ENCODE measurements at regions of chr3 and their contacts with region 1.

Region 1: GRCh38 chr3:141231101-141231935 is at the start of gene PXYLP1:
- DNase-seq: peak; percentile 93
- ATAC-seq: peak; percentile 94
- H3K4me3 Mint-ChIP-seq: peak within 1 kb of the TSS; percentile 87
- H3K27ac Mint-ChIP-seq: peak within 1 kb of the TSS; percentile 96
- H3K4me1 Mint-ChIP-seq: peaks cover 50% of the 10 kb centered on the region
- H3K27me3 Mint-ChIP-seq: no peaks in the 10 kb centered on the region
- total RNA-seq, gene PXYLP1: 15.0 to 16.5 TPM

Region 2: DNA sequence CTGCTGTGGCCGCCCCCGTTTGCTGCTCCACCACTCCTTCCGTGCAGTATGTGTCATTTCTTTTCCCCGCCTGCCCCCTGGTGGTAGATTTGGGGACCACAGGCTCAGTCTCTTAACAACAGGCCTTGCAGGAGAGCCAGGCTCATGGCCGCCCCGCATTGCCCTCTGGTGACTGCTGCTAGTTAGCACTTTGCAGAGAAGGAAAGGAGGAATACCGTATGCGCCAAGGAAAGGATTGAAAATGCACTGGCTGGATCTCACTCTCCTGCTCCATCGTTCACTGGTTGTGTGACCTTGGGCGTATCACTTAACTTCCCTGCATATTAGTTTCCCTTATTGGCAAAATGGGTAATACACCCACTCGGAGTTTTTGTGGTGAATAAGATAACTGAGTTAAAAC is 39.0 kb before region 1 on chr3:
- CTCF ChIA-PET with region 1: interaction called, 15 read pairs
- POLR2A ChIA-PET with region 1: no interaction called
- DNase-seq: peak; percentile 97
- ATAC-seq: peak; percentile 100
- H3K4me3 Mint-ChIP-seq: no peak overlapping the region
- H3K27ac Mint-ChIP-seq: no peak overlapping the region
- H3K4me1 Mint-ChIP-seq: peaks cover 14% of the 10 kb centered on the region
- H3K27me3 Mint-ChIP-seq: peaks cover 21% of the 10 kb centered on the region

Region 3: GRCh38 chr3:141255846-141256261 is 24.5 kb after region 1 on chr3:
- CTCF ChIA-PET with region 1: interaction called, 337 read pairs
- POLR2A ChIA-PET with region 1: interaction called, 32 read pairs
- DNase-seq: peak; percentile 66
- ATAC-seq: peak; percentile 98
- H3K4me3 Mint-ChIP-seq: no peak overlapping the region
- H3K27ac Mint-ChIP-seq: peak overlapping the region; percentile 66
- H3K4me1 Mint-ChIP-seq: peaks cover 25% of the 10 kb centered on the region
- H3K27me3 Mint-ChIP-seq: no peaks in the 10 kb centered on the region

Region 4: GRCh38 chr3:141279077-141279967 is 48.0 kb after region 1 on chr3:
- CTCF ChIA-PET with region 1: interaction called, 65 read pairs
- POLR2A ChIA-PET with region 1: interaction called, 9 read pairs
- DNase-seq: peak; percentile 40
- ATAC-seq: peak; percentile 48
- H3K4me3 Mint-ChIP-seq: no peak overlapping the region
- H3K27ac Mint-ChIP-seq: peak overlapping the region; percentile 10
- H3K4me1 Mint-ChIP-seq: peaks cover 31% of the 10 kb centered on the region
- H3K27me3 Mint-ChIP-seq: no peaks in the 10 kb centered on the region

Measured in activated CD8-positive, alpha-beta T cell treated with anti-CD3 and anti-CD28 coated beads, Interleukin-2, amount 10 ng/mL, durations not matched to agents 7 days and 5 days (primary cell).